Natural killer cell (primary cell): ENCODE measurements at regions of chr5 and their contacts with region 1.

Region 1: GRCh38 chr5:59174248-59174844 is 591.5 kb downstream of the RAB3C start:
- DNase-seq: peak in 1 of 2 donors; percentile 81
- ATAC-seq: peak; percentile 86 to 93 (median 93)
- H3K4me3 ChIP-seq: no peak overlapping the region
- H3K4me3 Mint-ChIP-seq: no peak overlapping the region
- H3K27ac ChIP-seq: no peak overlapping the region
- H3K27ac Mint-ChIP-seq: peak overlapping the region in 1 of 2 donors; percentile 50
- H3K4me1 ChIP-seq: no peaks in the 10 kb centered on the region
- H3K4me1 Mint-ChIP-seq: peaks cover 4 to 14% of the 10 kb centered on the region in 2 donors
- H3K27me3 ChIP-seq: no peaks in the 10 kb centered on the region
- H3K27me3 Mint-ChIP-seq: no peaks in the 10 kb centered on the region
- CTCF ChIP-seq: peak; percentile 90

Region 2: DNA sequence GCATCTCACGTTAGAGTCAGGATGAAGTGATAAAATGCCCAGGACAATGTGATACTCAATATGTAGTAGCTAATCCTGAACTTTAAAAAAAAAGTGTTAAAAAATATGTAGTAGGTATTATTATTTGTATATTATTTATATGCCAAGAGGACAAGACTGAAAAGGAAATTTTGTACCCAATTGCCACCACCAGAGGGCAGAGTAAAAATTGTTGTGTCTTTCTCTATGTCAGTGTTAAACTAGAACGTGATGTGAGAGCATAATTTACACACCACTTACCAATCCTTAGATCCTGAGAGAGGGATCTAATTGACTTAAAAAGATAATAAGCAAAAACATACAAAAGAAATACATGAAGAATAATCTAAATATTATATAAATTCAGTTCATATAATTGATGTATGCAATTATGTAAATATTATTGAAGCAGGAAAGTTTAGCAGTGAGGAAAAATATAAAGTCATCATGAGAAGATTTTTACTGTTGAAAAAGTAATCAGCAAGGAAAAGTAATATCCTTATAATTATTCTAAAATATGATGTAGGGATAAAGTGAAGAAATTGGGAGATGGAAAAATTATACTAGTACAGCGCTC is 302.6 kb before region 1 on chr5:
- intact Hi-C with region 1: loop called (anchors 5 kb)
- DNase-seq: peak in 1 of 2 donors; percentile 60
- ATAC-seq: peak in 1 of 3 donors; percentile 60
- H3K4me3 ChIP-seq: no peak overlapping the region
- H3K4me3 Mint-ChIP-seq: no peak overlapping the region
- H3K27ac ChIP-seq: no peak overlapping the region
- H3K27ac Mint-ChIP-seq: no peak overlapping the region
- H3K4me1 ChIP-seq: no peaks in the 10 kb centered on the region
- H3K4me1 Mint-ChIP-seq: no peaks in the 10 kb centered on the region
- H3K27me3 ChIP-seq: no peaks in the 10 kb centered on the region
- H3K27me3 Mint-ChIP-seq: peaks cover 11 to 26% of the 10 kb centered on the region in 2 donors
- CTCF ChIP-seq: peak; percentile 69

Region 3: DNA sequence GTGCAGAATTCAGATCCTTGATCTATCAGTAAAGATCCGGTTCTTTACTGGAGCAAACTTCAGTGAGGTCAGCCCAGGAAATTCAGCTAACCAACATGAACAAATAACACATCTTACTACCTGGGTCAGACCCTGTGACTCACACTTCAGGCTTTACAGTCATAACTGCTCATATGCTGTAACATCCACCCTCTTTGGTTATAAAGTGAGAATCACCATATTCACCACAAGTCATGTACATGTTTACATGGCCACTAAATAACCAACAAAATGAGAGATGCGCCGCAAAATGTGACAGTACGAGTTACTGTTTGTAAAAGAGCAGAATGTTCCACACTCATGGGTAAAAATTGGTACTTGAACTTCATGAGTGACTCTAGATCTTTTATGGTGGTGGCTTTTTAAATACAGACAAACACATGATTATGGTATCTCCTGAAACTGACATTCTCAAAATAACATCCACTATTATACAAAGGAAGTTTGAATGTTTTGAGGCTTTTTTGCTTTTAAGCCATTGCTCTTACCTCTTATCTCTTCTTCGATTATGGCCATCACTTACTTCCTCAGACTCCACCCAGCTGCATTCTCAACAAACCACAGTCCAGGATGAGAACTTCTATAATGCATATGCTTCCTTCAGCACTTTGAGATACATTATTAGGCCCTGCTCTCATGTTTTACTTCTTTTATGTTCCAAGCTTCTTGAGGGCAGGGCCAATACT is 74.9 kb before region 1 on chr5:
- intact Hi-C with region 1: loop called (anchors 1 kb)
- DNase-seq: peak; percentile 42 to 84
- ATAC-seq: peak; percentile 88 to 97 (median 96)
- H3K4me3 ChIP-seq: no peak overlapping the region
- H3K4me3 Mint-ChIP-seq: peak overlapping the region; percentile 63
- H3K27ac ChIP-seq: peak overlapping the region; percentile 86
- H3K27ac Mint-ChIP-seq: peak overlapping the region; percentile 88 to 94
- H3K4me1 ChIP-seq: peaks cover 16% of the 10 kb centered on the region
- H3K4me1 Mint-ChIP-seq: peaks cover 43 to 46% of the 10 kb centered on the region in 2 donors
- H3K27me3 ChIP-seq: no peaks in the 10 kb centered on the region
- H3K27me3 Mint-ChIP-seq: no peaks in the 10 kb centered on the region
- CTCF ChIP-seq: no peak

Region 4: DNA sequence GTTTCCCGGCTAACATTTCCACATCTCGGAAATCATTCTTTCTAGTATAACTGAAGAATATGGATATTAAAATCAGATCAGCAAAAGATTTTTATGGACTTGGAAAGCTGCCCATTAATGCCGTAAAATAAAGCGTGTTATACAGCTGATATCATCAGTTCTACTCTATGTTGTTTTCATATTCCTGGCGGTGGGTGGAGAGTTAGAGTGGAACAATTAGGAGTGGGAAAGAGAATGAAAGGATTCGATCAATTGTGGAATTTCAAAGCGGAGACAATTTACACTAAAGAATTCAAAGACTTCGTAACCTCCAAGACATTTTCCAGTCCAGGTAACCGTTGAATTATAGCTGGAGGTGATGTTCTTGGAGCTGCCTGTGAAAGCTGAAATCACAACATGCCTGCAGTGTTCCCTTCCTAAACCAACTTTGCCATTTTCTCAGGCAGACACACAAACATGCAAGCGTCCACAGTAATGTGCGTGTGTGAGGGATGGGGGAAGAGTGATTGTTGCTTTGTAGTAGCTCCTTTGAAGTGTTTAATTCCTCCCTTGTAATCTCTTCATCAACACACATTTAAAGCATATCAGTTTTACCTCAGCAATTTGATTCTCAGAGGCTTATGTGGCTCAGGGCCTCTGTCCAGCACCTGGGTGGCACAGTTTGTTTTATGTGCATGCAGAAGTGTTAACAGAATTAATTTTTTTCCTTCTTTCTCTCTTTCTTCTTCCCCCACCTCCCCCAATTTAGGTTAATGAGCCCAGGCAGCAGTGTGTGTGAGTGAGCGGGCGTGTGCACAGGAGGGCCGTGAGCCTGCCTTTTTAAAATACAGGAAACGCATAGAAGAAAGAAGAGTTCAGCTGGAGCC is 47.4 kb before region 1 on chr5:
- intact Hi-C with region 1: loop called (anchors 5 kb)
- DNase-seq: peak in 1 of 2 donors; percentile 76
- ATAC-seq: no peak
- H3K4me3 ChIP-seq: peak overlapping the region; percentile 17
- H3K4me3 Mint-ChIP-seq: no peak overlapping the region
- H3K27ac ChIP-seq: peak overlapping the region; percentile 80
- H3K27ac Mint-ChIP-seq: no peak overlapping the region
- H3K4me1 ChIP-seq: peaks cover 26% of the 10 kb centered on the region
- H3K4me1 Mint-ChIP-seq: peaks cover 0 to 5% of the 10 kb centered on the region in 2 donors
- H3K27me3 ChIP-seq: no peaks in the 10 kb centered on the region
- H3K27me3 Mint-ChIP-seq: no peaks in the 10 kb centered on the region
- CTCF ChIP-seq: no peak